PC-9 (cell line): ENCODE measurements at regions of chr4 and their contacts with region 1.

Region 1: DNA sequence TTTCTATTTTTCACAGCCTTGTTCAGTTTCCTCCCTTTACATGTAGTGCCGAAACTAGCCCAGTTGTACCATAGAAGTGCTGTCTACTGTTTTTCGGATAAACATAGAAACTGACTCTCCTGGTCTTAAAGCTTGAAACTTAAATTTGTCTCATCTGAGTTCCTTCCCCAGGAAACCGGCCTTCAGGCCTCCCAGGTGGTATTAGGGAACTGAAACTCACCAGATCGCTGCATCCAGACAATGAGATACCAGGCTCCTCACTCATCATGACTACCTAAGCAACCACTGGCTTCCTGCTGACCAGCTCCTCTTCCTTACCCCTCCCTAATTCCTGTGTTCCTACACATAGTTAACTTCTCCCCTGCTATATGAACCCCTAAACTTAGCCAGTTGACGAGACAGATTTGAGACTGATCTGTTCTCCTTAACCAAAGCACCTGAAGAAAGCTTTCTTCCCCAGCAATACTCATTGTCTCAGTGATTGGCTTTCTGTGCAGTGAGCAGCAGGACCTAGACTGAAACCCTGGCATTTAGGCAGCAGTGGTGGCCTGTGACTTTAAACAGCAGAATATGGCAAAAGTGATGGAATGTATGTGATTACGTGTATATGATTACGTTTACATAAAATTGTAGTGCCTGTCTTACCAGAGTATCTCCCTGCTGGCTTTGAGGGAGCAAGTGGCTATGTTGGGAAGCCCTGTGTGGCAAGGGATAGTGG is 959.1 kb upstream of the LCORL start:
- DNase-seq: peak; percentile 34 to 35
- H3K4me3 ChIP-seq: no peak overlapping the region
- H3K27ac ChIP-seq: peak overlapping the region; percentile 86
- H3K4me1 ChIP-seq: 0 out of 2 replicates have a peak, but pooled peaks cover 8% of the 10 kb centered on the region
- H3K27me3 ChIP-seq: no peaks in the 10 kb centered on the region
- CTCF ChIP-seq: no peak

Region 2: DNA sequence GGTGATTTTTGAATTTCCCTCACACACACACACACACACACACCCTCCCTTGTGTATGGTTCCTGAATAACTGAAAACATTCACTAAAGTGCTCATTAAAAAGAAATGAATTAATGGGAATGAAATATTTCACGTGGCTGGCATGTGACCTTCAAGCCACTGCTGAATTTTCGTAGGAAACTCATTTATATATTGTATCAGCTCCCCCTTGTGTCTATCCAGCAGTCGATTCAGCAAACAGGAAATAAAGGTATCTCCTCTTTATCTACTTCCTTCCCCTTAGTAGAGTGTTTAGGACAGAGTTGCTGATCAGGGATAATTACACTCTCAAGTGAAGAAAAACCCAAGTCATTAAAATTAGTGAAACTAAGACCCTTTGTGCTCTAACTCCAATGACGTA is 46.5 kb before region 1 on chr4:
- CTCF ChIA-PET with region 1: no interaction called
- POLR2A ChIA-PET with region 1: no interaction called
- intact Hi-C with region 1: no loop called
- DNase-seq: no peak
- H3K4me3 ChIP-seq: no peak overlapping the region
- H3K27ac ChIP-seq: no peak overlapping the region
- H3K4me1 ChIP-seq: no peaks in the 10 kb centered on the region
- H3K27me3 ChIP-seq: 0 out of 2 replicates have a peak, but pooled peaks cover 4% of the 10 kb centered on the region
- CTCF ChIP-seq: no peak

Region 3: GRCh38 chr4:19095491-19096046 is 114.9 kb after region 1 on chr4:
- CTCF ChIA-PET with region 1: interaction called, 11 read pairs
- POLR2A ChIA-PET with region 1: no interaction called
- intact Hi-C with region 1: no loop called
- DNase-seq: no peak
- H3K4me3 ChIP-seq: no peak overlapping the region
- H3K27ac ChIP-seq: no peak overlapping the region
- H3K4me1 ChIP-seq: no peaks in the 10 kb centered on the region
- H3K27me3 ChIP-seq: no peaks in the 10 kb centered on the region
- CTCF ChIP-seq: no peak